ENCODE measurements at regions of chr2 and their contacts with region 1.

Region 1: DNA sequence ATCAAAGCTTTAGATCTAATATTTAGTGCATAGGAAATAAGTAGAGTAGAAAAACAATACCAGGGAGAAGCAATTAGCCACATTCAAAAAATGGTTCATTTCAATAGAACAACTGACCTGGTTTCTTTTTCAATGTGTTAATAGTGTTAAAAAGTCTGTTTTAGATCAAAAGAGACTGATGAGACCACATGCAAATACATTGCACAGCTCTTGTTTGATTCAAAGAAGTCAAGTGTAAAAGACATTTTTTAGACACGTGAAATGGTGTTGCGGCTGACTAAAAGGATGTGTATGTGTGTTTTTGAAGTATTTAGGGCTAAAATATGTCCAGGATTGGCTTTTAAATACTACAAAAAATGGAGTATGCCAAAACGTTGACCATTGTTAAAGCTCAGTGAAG is 1.2 kb upstream of the AOX1 start:
- DNase-seq: no peak

Region 2: DNA sequence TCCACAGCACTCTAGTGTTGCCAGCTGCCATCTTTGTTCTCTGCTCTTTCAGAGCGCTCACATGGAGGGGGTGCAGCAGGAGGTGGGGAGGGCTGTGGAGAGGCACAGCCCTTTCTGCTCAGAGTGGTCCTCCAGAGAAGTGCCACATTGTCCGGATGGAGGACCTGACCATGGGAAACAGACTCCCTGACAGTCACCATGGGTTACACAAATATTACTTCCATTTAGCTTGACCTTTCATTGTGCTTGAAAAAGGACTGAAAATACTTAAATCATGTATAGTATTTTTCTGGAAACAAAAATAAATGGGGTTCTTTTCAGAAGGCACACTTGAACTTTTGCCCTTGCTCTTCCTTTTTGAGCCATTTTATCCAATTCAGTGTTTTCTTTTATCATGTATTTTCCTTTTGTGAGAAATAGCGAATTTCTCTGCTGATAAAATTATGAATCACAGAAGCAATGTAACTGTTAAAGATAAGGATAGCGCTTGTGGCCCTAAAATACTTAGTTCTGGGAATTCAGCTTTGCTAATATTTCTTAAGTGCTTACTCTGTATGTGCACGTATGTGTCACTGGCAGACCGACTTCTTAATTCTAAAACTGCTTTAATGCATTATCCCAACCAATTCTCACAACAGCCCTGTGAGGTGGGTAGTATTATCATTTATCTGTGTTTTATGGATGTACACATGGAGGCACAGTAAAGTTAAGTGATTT is 244.0 kb before region 1 on chr2:
- intact Hi-C with region 1: loop called in 1 of 2 experiments (anchors 5 kb)
- DNase-seq: no peak

Region 3: DNA sequence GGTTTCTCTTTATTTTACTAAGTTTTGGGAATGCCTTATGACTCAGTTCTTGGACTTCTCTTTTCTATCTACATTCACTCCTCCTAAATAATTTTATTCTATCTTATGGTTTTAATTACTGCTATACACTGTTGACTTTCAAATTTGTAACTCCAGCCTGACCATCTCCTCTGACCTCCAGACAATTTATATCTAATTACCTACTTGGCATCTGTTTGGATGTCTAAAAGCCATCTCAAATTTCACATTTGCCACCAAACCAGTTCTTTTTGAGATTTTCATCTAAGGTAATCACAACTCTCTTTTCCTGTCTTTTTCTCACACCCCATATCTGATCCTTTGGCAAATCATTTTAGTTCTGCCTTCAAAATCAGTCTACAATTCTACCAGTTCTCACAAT is 47.0 kb before region 1 on chr2:
- intact Hi-C with region 1: no loop called
- DNase-seq: no peak

Region 4: DNA sequence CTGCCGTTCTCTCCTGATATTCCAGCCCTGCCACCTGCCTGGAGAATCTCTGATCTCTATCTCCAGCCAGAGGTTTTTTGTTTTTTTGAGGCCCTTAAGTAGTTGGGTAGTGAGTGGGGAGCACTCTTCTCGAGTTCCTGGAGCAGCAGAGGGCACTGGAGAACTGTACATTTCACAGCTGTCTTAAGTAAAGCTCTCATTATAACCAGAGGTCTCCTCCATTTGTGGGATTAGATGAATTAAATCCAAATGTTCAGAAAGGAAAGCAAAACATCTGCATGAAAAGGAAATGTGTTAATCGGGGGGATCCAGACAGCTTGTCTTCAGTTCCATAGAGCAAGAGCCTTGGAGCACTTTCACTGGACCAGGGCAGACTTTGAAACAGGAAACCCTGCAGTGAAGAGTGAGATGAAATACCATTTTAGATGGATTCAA is 34.0 kb after region 1 on chr2:
- intact Hi-C with region 1: no loop called
- DNase-seq: no peak

Region 5: DNA sequence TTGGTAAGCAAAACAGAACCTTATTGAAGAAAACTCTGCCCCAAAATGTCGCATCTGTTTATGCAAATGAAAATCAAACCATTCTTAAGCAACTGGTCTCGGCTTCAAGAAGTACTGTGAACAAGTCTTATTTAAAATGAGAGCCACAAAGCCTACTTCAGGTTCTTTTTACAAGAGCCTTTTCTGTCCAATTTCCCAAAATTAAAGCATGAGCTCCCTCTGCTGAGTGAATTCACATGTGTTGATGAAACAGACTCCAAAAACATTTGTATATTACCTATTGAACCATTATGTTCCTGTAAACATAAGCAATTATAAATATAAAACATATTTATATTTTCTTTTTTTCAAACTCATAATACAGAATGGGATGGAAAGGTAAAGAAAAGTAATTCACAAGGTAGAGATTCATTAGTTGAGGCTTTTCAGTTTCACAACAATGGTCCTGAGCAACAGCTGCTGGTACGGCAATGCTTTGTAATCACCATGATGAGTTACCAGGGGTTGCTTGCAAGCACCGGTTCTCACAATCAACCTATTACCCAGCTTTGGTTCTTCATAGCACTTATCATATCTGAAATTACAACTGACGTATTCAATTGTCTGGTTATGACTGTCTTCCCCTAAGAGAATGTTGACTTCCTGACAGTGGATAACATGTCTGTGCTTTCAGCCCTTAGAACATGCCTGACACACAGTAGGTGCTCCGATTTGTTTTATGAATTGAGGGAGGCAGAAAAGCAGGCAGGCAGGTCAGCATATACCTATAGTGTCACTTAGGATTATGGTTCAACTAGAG is 118.7 kb after region 1 on chr2:
- intact Hi-C with region 1: loop called (anchors 5 kb)
- DNase-seq: no peak

Region 6: GRCh38 chr2:200756618-200757321 is 172.1 kb after region 1 on chr2:
- intact Hi-C with region 1: no loop called
- DNase-seq: no peak

Measured in posterior vena cava (tissue), 2 donors.